Stomach (tissue), 19 donors: ENCODE measurements at regions of chr19 and their contacts with region 1.

Region 1: GRCh38 chr19:33778089-33778791 is 18.4 kb upstream of the KCTD15 start:
- DNase-seq: peak; percentile 88 to 94
- H3K4me3 ChIP-seq: peak overlapping the region in 2 of 4 donors; percentile 28 to 34
- H3K27ac ChIP-seq: no peak overlapping the region
- H3K4me1 ChIP-seq: peaks cover 6 to 25% (median 17%) of the 10 kb centered on the region in 4 donors
- H3K27me3 ChIP-seq: peaks cover 0 to 63% (median 23%) of the 10 kb centered on the region in 3 donors
- CTCF ChIP-seq: peak in 6 of 7 experiments; percentile 98 to 100 (median 100)
- EP300 ChIP-seq: no peak
- POLR2A ChIP-seq: no peak

Region 2: GRCh38 chr19:33241530-33242101 is 536.6 kb before region 1 on chr19:
- intact Hi-C with region 1: loop called (anchors 10 kb)
- DNase-seq: peak; percentile 31 to 60
- H3K4me3 ChIP-seq: no peak overlapping the region
- H3K27ac ChIP-seq: no peak overlapping the region
- H3K4me1 ChIP-seq: peaks cover 8 to 11% (median 10%) of the 10 kb centered on the region in 4 donors
- H3K27me3 ChIP-seq: peaks cover 0 to 14% (median 0%) of the 10 kb centered on the region in 3 donors
- CTCF ChIP-seq: peak in 5 of 7 experiments; percentile 52 to 88 (median 80)
- EP300 ChIP-seq: no peak
- POLR2A ChIP-seq: no peak

Region 3: DNA sequence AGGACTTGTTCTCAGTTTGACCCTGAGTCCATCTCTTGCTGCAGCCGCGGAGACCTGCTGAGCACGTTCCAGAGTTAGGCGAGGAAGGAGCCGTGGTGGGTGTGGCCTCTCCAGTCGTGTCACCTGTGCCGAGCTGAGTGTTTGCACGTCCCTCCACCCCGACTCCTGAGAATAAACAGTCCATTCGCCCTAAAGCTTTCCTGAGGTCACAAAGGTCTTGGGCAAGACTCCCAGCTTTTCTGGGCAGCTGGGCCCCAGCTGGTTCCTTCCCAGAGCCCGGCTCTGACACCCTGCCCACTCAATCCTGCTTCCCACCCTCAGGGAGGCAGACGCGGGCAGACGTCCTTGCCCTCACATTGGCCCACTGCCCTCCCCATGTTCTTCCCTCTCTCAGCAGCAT is 160.6 kb after region 1 on chr19:
- intact Hi-C with region 1: no loop called
- DNase-seq: peak; percentile 14 to 48
- H3K4me3 ChIP-seq: no peak overlapping the region
- H3K27ac ChIP-seq: no peak overlapping the region
- H3K4me1 ChIP-seq: peaks cover 0 to 10% (median 0%) of the 10 kb centered on the region in 4 donors
- H3K27me3 ChIP-seq: no peaks in the 10 kb centered on the region
- CTCF ChIP-seq: no peak
- EP300 ChIP-seq: no peak
- POLR2A ChIP-seq: no peak

Region 4: GRCh38 chr19:33998739-33999345 is 220.6 kb after region 1 on chr19:
- intact Hi-C with region 1: loop called (anchors 5 kb)
- DNase-seq: peak in 1 of 2 donors; percentile 2
- H3K4me3 ChIP-seq: no peak overlapping the region
- H3K27ac ChIP-seq: no peak overlapping the region
- H3K4me1 ChIP-seq: no peaks in the 10 kb centered on the region
- H3K27me3 ChIP-seq: peaks cover 0 to 3% (median 0%) of the 10 kb centered on the region in 3 donors
- CTCF ChIP-seq: peak in 3 of 7 experiments; percentile 17 to 40 (median 34)
- EP300 ChIP-seq: no peak
- POLR2A ChIP-seq: no peak

Region 5: GRCh38 chr19:34096020-34096915 is 318.0 kb after region 1 on chr19:
- intact Hi-C with region 1: loop called (anchors 5 kb)
- DNase-seq: peak in 1 of 2 donors; percentile 75
- H3K4me3 ChIP-seq: no peak overlapping the region
- H3K27ac ChIP-seq: no peak overlapping the region
- H3K4me1 ChIP-seq: peaks cover 0 to 9% (median 4%) of the 10 kb centered on the region in 4 donors
- H3K27me3 ChIP-seq: no peaks in the 10 kb centered on the region
- CTCF ChIP-seq: peak in 5 of 7 experiments; percentile 20 to 71 (median 46)
- EP300 ChIP-seq: no peak
- POLR2A ChIP-seq: no peak